ENCODE measurements at regions of chr3 and their contacts with region 1.

Region 1: DNA sequence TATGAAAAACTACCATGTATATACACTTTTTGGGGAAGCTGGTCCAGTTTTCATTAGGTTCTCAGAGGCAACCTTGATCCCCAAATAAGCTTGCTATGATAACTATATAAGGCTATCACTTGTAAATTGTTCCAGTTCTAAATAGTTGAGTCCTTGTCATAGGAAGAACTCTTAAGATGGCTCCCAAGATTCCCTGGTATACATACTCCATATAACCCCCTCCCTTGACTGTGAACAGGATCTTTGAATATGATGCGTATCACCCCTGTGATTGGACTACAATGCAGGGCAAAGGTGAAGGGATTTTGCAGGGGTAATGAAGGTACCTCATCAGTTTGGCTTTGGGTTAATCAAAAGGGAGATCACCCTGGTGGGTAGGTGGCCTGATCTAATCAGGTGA is 48.6 kb upstream of the TRIM59 start:
- DNase-seq: no peak
- ATAC-seq: no peak
- H3K4me3 ChIP-seq: no peak overlapping the region
- H3K27ac ChIP-seq: no peak overlapping the region
- H3K4me1 ChIP-seq: no peaks in the 10 kb centered on the region
- H3K27me3 ChIP-seq: no peaks in the 10 kb centered on the region
- CTCF ChIP-seq: no peak
- EP300 ChIP-seq: no peak
- POLR2A ChIP-seq: no peak
- RAD21 ChIP-seq: no peak

Region 2: DNA sequence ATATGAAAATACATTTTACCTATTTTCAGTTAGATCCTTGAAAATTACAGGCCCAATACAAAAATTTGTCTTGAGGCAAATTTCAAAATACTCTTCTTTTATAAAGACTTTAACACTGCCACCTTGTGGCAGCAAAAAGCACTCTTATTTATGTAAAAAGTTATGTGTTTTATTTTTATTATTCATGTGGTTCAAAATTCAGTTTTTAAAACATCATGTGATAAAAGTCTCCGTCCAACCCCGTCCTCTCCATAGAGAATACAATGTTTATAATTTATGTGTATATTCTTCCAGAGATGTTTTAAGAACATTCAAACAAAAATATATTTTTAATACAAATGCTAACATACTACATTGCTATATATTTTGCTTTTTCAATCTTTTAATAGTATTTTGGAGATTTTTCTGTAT is 11.7 kb before region 1 on chr3:
- CTCF ChIA-PET with region 1: interaction called, 11 read pairs
- POLR2A ChIA-PET with region 1: no interaction called
- RAD21 ChIA-PET with region 1: no interaction called
- SMC1A ChIA-PET with region 1: interaction called, 5 read pairs
- in situ Hi-C with region 1: no loop called
- intact Hi-C with region 1: no loop called
- DNase-seq: no peak
- ATAC-seq: peak; percentile 44
- H3K4me3 ChIP-seq: no peak overlapping the region
- H3K27ac ChIP-seq: no peak overlapping the region
- H3K4me1 ChIP-seq: peaks cover 3% of the 10 kb centered on the region; the same call in 1 of the 2 replicates
- H3K27me3 ChIP-seq: no peaks in the 10 kb centered on the region
- CTCF ChIP-seq: peak; percentile 30 to 58 (median 49); a peak in 5 of 6 replicates
- EP300 ChIP-seq: no peak
- POLR2A ChIP-seq: no peak
- RAD21 ChIP-seq: peak; percentile 33; the same call in 1 of the 2 replicates